ENCODE measurements at regions of chr11 and their contacts with region 1.

Region 1: DNA sequence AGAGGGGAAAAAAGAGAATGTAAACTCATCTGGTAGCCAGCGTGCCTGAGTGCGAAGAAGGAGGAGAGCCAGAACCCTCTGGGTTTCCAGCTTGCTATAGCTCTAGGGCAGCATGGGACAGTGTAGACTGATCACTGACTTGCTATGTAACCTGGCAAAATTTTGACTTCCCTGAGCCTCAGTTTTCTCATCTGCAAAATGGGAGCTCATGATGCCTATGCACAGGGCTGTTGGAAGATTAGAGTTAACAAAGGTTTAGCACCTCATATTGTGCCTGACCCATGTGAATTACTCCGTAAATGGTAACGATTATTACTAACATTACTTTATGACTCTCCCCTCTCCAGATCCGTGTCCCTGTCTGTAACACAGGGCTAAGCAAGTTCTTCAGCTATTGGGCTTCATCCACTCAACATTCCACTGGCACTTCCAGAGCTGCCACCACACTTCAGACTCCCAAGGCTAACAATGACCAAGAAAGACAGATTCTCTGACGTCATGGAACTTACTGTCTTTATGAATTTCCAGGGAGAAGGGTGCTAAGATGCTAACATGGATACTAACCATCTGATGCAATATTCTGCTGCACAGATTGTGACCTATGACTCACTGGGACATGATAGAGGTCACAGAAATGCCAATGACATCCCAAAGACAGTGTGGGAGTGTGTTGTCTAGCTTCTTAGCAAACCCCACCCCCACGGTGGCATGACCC is 195.2 kb downstream of the TRIM29 start:
- DNase-seq: no peak
- H3K4me3 ChIP-seq: no peak overlapping the region
- H3K27ac ChIP-seq: no peak overlapping the region
- H3K4me1 ChIP-seq: no peaks in the 10 kb centered on the region
- H3K27me3 ChIP-seq: peaks cover 3% of the 10 kb centered on the region
- CTCF ChIP-seq: no peak

Region 2: DNA sequence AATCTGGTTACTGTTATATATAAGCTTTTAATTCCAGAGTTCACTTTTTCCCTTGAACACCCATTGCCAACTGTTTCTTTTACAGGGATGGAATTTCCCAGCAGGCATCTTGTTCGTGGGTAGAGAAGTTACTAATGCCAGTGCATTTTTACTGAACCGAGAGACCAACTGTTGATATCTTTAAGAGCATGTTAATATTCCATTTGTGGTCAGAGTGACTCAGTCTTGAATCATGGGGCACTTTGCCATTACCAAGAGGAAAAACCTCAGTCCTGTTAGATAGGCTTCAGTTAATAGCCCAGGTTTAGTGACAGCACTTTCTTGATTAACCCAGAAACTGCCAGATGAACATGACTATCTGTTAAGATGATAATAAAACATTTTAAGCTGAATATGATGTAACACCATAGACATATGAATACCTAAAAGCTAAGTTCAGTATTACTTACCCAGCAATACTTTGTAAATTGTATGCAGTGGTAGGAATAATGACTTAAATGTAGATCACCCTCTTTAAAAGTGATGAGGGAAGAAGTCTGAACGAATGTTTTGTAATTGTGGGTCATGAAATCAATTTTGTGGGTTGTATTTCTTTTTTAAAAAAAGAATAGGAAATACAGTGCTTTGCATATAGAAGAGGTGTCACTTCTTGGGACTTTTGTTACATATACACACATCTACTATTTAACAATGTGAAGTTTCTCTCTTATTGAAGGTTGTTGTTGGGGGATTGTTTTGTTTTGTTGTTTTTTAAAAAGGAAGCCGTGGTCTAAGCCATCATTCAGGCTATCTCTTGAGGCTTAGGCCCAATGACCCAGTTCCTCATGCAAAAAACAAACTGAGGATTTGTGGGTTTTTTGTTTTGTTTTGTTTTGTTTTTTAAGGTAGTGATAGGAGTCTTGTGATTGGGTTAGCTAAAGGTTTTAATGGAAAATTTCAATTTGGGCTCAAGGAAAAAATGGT is 489.6 kb after region 1 on chr11:
- CTCF ChIA-PET with region 1: interaction called, 14 read pairs
- dilution Hi-C with region 1: no loop called
- in situ Hi-C with region 1: no loop called
- intact Hi-C with region 1: no loop called
- DNase-seq: peak; percentile 97
- H3K4me3 ChIP-seq: no peak overlapping the region
- H3K27ac ChIP-seq: peak overlapping the region; percentile 71
- H3K4me1 ChIP-seq: peaks cover 12% of the 10 kb centered on the region
- H3K27me3 ChIP-seq: no peaks in the 10 kb centered on the region
- CTCF ChIP-seq: no peak

Measured in mammary epithelial cell (primary cell).